Dorsolateral prefrontal cortex (tissue), 120 donors: ENCODE measurements at regions of chr6 and their contacts with region 1.

Region 1: DNA sequence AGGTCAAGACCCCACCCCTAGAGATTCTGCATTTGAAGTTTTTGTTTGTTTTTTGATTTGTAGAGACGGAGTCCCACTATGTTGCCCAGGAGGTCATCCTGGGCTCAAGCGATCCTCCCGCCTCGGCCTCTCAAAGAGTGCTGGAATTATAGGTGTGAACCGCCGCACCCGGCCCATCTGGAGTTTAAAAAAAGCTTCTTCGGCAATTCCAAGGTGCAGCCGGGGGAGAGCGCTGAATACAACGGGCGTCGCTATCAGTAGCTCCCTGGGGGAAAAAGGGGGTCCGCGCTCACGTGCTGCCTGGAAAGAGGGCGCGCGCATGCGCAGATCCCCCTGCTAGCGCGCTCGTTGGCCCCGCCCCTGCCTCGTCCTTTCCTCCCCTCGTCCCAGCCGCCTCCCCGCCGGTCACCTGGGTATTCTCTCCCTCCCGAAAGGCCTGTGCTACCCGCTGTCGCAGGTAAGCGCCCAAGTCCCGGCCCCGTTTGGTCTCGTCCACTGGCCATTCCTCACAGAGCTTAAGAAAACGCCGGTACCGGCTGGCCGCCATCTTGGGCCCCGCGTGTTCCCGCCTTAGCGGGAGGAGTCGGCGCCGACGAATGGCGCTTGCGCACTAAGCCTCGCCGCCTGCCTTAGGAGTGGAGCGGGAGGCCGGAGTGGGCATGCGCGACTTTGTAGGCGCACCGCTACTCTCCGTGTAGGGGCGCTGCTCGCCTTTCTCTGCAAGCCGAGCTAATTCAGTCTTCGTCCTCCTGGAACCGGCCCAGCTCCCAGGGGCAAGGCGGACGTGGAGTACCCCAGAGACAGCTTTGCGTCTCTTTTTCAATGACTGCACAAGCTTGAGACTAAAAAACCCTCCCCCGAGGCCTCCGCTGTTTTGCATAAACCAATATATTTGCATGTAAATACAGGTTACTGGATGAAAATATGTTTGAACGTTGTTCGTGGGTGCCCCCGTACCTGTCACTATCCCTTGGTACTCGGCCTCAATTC is at the start of gene UQCC2:
- DNase-seq: peak; percentile 94 to 97 (median 96)
- H3K4me3 ChIP-seq: peak within 1 kb of the TSS; percentile 40 to 99 (median 79)
- H3K27ac ChIP-seq: peak within 1 kb of the TSS; percentile 78 to 99 (median 94)
- H3K27me3 ChIP-seq: no peaks in the 10 kb centered on the region
- CTCF ChIP-seq: peak; percentile 37 to 96 (median 83)
- total RNA-seq, gene UQCC2: 32.1 to 86.2 (median 53.0) TPM

Region 2: GRCh38 chr6:33633462-33634158 is 77.8 kb before region 1 on chr6:
- intact Hi-C with region 1: loop called in 1 of 2 experiments (anchors 5 kb)
- DNase-seq: peak in 6 of 10 donors; percentile 31 to 69 (median 51)
- H3K4me3 ChIP-seq: peak overlapping the region; percentile 33 to 71 (median 56)
- H3K27ac ChIP-seq: peak overlapping the region in 9 of 59 donors; percentile 3 to 73 (median 31)
- H3K27me3 ChIP-seq: no peaks in the 10 kb centered on the region
- CTCF ChIP-seq: no peak

Region 3: GRCh38 chr6:33744001-33744848 is 32.8 kb after region 1 on chr6:
- intact Hi-C with region 1: loop called (anchors 2 kb)
- DNase-seq: peak; percentile 69 to 83 (median 79)
- H3K4me3 ChIP-seq: peak overlapping the region in 47 of 59 donors; percentile 16 to 79 (median 58)
- H3K27ac ChIP-seq: peak overlapping the region in 52 of 59 donors; percentile 44 to 99 (median 94)
- H3K27me3 ChIP-seq: no peaks in the 10 kb centered on the region
- CTCF ChIP-seq: peak; percentile 61 to 94 (median 87)

Region 4: DNA sequence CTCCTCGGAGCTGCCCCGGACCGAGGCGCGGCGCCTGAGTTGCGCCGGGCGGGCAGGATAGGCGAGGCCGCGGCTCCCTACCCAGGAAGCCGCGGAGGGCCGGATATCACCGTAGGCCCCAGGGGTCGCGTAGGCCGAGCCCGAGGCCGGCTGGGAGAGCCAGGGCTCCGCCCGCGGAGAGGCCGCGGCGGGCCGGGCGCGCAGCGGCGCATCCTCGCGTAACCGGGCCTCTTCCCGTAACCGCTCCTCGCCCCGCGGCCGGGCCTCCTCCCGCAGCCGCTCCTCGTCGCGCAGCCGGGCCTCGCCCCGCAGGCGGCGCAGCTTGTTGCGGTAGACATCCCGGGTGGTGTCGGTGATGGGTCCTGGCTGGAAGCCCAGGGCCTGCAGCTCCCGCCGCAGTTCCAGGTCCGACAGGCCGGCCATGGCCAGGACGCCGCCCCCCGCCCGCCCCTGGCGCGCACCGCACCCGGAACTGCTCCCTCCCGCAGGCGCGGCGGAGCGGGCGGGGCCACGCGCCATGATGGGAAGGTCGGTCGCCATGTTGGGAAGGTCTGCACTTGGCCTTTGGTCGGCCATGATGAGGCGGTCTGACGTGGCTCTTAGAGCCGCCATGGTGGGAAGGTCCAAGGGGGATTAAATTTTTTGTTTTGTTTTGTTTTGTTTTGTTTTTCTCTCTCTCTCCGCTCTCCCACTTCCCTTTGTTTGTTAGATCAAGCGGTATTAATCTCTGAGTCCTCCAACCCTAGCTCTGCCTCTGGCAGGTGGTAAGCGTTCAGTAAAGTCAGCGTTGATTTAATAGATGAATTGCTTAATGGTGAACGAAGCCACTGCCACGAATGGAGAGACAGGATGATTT is 77.5 kb after region 1 on chr6 and contains the start of gene LEMD2:
- intact Hi-C with region 1: loop called (anchors 5 kb)
- DNase-seq: peak; percentile 83 to 96 (median 90)
- H3K4me3 ChIP-seq: peak within 1 kb of the TSS; percentile 33 to 98 (median 83)
- H3K27ac ChIP-seq: peak within 1 kb of the TSS; percentile 75 to 99 (median 95)
- H3K27me3 ChIP-seq: no peaks in the 10 kb centered on the region
- CTCF ChIP-seq: peak in 38 of 56 donors; percentile 4 to 66 (median 34)
- total RNA-seq, gene LEMD2: 37.1 to 79.5 (median 56.7) TPM

Region 5: GRCh38 chr6:34154668-34155447 is 443.4 kb after region 1 on chr6:
- intact Hi-C with region 1: loop called (anchors 5 to 10 kb)
- DNase-seq: peak in 9 of 10 donors; percentile 30 to 79 (median 50)
- H3K4me3 ChIP-seq: peak overlapping the region in 53 of 59 donors; percentile 8 to 61 (median 40)
- H3K27ac ChIP-seq: no peak overlapping the region
- H3K27me3 ChIP-seq: peaks cover 0 to 49% (median 19%) of the 10 kb centered on the region in 45 donors
- CTCF ChIP-seq: peak; percentile 56 to 98 (median 94)